Activated CD4-positive, alpha-beta T cell treated with anti-CD3 and anti-CD28 coated beads for 36 hours (primary cell): ENCODE measurements at regions of chr14 and their contacts with region 1.

Region 1: GRCh38 chr14:79881299-79881698 is 330.0 kb downstream of the DIO2 start:
- DNase-seq: no peak
- ATAC-seq: no peak
- H3K4me3 Mint-ChIP-seq: no peak overlapping the region
- H3K27ac Mint-ChIP-seq: no peak overlapping the region
- H3K4me1 Mint-ChIP-seq: no peaks in the 10 kb centered on the region
- H3K27me3 Mint-ChIP-seq: peaks cover 2% of the 10 kb centered on the region

Region 2: GRCh38 chr14:79781882-79782281 is 99.4 kb before region 1 on chr14:
- CTCF ChIA-PET with region 1: no interaction called
- POLR2A ChIA-PET with region 1: interaction called, 11 read pairs
- intact Hi-C with region 1: no loop called
- DNase-seq: no peak
- ATAC-seq: no peak
- H3K4me3 Mint-ChIP-seq: no peak overlapping the region
- H3K27ac Mint-ChIP-seq: no peak overlapping the region
- H3K4me1 Mint-ChIP-seq: no peaks in the 10 kb centered on the region
- H3K27me3 Mint-ChIP-seq: no peaks in the 10 kb centered on the region